Activated CD4-positive, alpha-beta memory T cell treated with anti-CD3 and anti-CD28 coated beads for 36 hours (primary cell): ENCODE measurements at regions of chr21 and their contacts with region 1.

Region 1: DNA sequence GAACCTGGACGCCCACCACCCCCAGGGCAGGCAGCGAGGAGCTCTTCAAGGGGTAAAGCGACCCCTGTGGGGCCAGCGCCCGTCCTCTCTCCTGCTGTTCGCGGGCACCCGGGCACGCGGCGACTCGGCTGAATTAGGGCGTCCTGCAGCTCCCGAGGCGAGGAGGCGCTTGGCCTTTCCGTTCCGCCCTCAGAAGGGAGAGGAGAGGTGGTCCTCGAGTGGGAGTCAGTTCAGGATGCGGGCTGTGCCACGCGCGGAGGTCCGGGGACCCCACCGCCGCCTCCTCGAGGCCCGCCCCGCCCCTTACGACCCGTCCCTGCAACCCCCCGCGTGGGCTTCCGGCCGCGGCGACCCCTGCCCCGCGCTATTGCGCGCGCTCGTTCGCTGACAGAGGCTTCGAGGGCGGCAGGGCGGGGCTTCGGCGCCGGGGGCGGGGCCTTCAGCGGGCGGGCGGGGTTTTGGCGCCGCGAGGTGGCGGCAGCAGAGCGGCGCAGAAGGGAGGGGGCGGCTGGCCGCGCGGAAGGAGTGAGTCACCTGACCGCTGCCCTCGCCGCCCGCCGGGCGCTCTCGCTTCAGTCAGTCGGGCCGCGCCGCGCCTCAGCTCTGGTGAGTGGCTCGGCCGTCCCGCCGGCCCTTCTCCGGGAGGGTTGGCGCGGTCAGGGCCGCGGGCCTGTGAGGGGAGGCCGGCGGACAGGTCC is at the start of gene BACH1:
- DNase-seq: peak; percentile 93
- H3K4me3 Mint-ChIP-seq: peak within 1 kb of the TSS; percentile 85
- H3K27ac Mint-ChIP-seq: peak within 1 kb of the TSS; percentile 89
- H3K4me1 Mint-ChIP-seq: peaks cover 64% of the 10 kb centered on the region
- H3K27me3 Mint-ChIP-seq: no peaks in the 10 kb centered on the region
- total RNA-seq, gene BACH1: 22.9 to 23.0 TPM

Region 2: DNA sequence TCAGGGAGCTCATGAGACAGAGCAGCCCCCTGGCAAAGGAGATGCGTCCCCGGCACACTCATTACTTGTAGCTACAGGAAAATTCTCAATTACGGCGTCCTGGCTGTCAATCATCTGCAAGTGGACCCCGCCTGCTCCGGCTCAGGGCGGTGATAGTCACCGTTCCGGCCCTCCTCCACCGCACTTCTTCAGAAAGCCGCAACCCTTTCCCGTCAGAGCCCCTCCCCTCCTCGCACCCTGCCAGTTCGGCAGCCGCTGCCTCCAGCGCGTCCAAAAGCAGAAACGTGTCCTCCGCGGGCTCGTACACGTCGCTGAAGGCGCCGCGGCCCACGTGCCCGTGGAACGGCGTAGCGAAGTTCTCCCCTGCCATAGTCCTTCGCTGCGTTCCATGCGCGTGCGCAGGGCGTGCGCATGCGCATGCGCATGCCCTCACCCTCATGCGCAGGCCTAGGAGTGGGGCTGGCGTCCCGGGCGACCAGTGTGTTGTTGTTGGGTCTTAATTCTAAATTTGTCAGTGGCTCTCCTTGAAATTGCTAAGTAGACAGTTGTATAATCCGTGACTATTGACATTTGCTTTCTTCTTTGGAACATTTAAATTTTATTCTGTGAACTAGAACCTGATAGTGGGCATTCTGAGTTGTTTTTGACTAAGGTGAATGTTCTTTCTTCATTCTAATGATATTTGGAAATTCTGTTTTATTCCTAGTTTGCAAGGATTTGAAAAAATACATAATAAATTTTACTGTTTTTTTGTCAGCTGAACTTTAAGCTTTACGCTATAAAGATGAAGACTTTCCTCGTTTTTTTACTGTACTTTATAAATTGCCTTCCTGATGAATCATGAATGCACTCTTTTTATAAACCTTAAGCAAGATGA is 413.3 kb before region 1 on chr21:
- CTCF ChIA-PET with region 1: no interaction called
- POLR2A ChIA-PET with region 1: interaction called, 3 read pairs
- intact Hi-C with region 1: loop called (anchors 1 kb)
- DNase-seq: peak; percentile 95
- H3K4me3 Mint-ChIP-seq: peak overlapping the region; percentile 89
- H3K27ac Mint-ChIP-seq: peak overlapping the region; percentile 99
- H3K4me1 Mint-ChIP-seq: peaks cover 14% of the 10 kb centered on the region
- H3K27me3 Mint-ChIP-seq: peaks cover 4% of the 10 kb centered on the region

Region 3: GRCh38 chr21:29073222-29074006 is 225.1 kb before region 1 on chr21 and contains the start of gene CCT8:
- CTCF ChIA-PET with region 1: interaction called, 3 read pairs
- POLR2A ChIA-PET with region 1: interaction called, 26 read pairs
- intact Hi-C with region 1: loop called (anchors 1 kb)
- DNase-seq: peak; percentile 99
- H3K4me3 Mint-ChIP-seq: peak within 1 kb of the TSS; percentile 96
- H3K27ac Mint-ChIP-seq: peak within 1 kb of the TSS; percentile 97
- H3K4me1 Mint-ChIP-seq: peaks cover 51% of the 10 kb centered on the region
- H3K27me3 Mint-ChIP-seq: no peaks in the 10 kb centered on the region
- total RNA-seq, gene CCT8: 431 to 435 TPM

Region 4: DNA sequence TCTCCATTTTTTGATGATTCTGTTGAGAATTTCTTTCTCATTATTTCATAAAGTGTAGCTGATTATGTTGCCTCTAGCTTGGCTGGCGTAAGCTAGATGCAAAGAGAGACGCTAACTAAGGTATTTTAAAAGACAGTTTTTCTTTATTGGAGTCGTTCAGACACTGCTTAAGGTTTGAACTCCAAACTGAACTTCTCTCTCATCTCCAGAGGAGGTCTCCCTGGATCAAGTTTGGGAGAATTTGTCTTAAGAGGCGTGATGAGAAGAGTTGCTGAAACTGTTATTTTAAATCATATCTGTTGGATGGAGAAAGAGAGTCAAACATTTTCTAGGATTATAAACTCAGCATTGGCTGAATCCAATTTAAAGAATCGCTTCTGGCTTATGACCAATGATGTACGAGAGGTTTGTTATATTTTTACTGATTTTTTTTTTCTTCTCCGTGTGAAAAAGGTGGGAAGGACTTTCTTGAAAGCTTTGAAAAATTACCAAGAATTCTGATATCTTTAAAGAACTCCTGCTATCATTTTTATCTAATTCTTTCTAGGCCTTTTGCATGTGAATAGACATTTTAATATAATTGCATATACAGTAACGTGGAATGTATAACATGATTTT is 134.1 kb before region 1 on chr21:
- CTCF ChIA-PET with region 1: interaction called, 11 read pairs
- POLR2A ChIA-PET with region 1: no interaction called
- intact Hi-C with region 1: loop called (anchors 10 kb)
- DNase-seq: no peak
- H3K4me3 Mint-ChIP-seq: no peak overlapping the region
- H3K27ac Mint-ChIP-seq: no peak overlapping the region
- H3K4me1 Mint-ChIP-seq: peaks cover 4% of the 10 kb centered on the region
- H3K27me3 Mint-ChIP-seq: no peaks in the 10 kb centered on the region

Region 5: GRCh38 chr21:29232601-29233546 is 65.6 kb before region 1 on chr21:
- CTCF ChIA-PET with region 1: interaction called, 7 read pairs
- POLR2A ChIA-PET with region 1: interaction called, 18 read pairs
- intact Hi-C with region 1: loop called (anchors 1 kb)
- DNase-seq: no peak
- H3K4me3 Mint-ChIP-seq: no peak overlapping the region
- H3K27ac Mint-ChIP-seq: peak overlapping the region; percentile 10
- H3K4me1 Mint-ChIP-seq: peaks cover 50% of the 10 kb centered on the region
- H3K27me3 Mint-ChIP-seq: peaks cover 24% of the 10 kb centered on the region

Region 6: GRCh38 chr21:29320031-29320430 is 21.5 kb after region 1 on chr21:
- CTCF ChIA-PET with region 1: no interaction called
- POLR2A ChIA-PET with region 1: no interaction called
- intact Hi-C with region 1: no loop called
- DNase-seq: no peak
- H3K4me3 Mint-ChIP-seq: no peak overlapping the region
- H3K27ac Mint-ChIP-seq: no peak overlapping the region
- H3K4me1 Mint-ChIP-seq: peaks cover 32% of the 10 kb centered on the region
- H3K27me3 Mint-ChIP-seq: no peaks in the 10 kb centered on the region

Region 7: DNA sequence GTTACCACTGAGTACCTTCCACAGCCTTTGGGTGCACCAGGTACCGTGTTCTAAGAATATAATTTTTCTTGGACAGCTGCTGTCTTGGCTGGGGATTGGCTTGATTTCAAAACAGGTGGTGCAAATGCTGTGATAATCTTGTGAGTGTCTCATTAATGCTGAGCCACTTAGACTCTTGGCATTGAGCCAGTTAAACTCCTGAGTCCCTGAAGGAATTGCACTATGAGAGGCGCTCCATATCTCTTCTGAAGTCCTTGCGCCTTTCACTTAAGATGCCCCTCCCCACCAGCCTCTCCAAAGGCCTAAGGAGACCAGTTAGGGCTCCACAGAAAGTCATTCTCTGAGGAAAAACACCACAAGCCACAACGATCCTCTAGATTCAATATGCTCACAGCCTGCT is 51.2 kb after region 1 on chr21:
- CTCF ChIA-PET with region 1: interaction called, 19 read pairs
- POLR2A ChIA-PET with region 1: interaction called, 8 read pairs
- intact Hi-C with region 1: loop called (anchors 1 kb)
- DNase-seq: no peak
- H3K4me3 Mint-ChIP-seq: no peak overlapping the region
- H3K27ac Mint-ChIP-seq: no peak overlapping the region
- H3K4me1 Mint-ChIP-seq: peaks cover 17% of the 10 kb centered on the region
- H3K27me3 Mint-ChIP-seq: no peaks in the 10 kb centered on the region

Region 8: DNA sequence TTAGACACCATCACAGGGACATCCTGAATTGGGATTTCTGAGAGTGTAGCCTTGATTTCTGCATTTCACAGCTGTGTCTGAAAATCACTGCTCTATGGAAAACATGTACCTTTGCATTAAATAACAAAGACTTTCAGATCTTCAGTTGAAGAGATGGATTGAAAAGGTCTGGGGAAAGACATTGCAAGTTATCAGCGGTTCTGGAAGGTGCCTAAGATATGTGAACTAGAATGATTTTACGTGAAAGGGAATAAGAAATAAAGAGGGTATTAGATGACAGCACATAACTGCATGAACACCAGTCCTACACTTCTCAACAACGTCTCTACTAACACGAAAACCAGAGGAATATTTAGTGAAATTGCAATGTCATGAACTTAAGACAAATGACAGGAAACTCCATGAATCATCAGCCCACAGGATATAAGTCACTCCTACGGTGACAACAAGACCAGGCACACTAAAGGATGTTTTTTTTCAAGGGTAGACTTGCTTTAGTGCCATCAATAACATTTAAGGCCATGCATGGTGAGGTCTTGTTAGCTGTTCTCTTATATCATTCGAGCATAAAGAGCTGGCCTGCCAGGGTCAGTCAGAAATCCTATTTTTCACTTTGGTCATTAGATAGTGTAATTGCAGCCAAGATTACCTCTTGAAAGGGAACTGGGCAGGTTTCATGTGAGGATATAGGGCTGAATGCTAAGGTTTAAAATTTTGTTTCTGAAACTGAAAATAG is 358.2 kb after region 1 on chr21:
- CTCF ChIA-PET with region 1: no interaction called
- POLR2A ChIA-PET with region 1: no interaction called
- intact Hi-C with region 1: no loop called
- DNase-seq: peak; percentile 10
- H3K4me3 Mint-ChIP-seq: peak overlapping the region; percentile 39
- H3K27ac Mint-ChIP-seq: peak overlapping the region; percentile 76
- H3K4me1 Mint-ChIP-seq: peaks cover 14% of the 10 kb centered on the region
- H3K27me3 Mint-ChIP-seq: peaks cover 4% of the 10 kb centered on the region